Dorsolateral prefrontal cortex (tissue), 120 donors: ENCODE measurements at regions of chr7 and their contacts with region 1.

Region 1: DNA sequence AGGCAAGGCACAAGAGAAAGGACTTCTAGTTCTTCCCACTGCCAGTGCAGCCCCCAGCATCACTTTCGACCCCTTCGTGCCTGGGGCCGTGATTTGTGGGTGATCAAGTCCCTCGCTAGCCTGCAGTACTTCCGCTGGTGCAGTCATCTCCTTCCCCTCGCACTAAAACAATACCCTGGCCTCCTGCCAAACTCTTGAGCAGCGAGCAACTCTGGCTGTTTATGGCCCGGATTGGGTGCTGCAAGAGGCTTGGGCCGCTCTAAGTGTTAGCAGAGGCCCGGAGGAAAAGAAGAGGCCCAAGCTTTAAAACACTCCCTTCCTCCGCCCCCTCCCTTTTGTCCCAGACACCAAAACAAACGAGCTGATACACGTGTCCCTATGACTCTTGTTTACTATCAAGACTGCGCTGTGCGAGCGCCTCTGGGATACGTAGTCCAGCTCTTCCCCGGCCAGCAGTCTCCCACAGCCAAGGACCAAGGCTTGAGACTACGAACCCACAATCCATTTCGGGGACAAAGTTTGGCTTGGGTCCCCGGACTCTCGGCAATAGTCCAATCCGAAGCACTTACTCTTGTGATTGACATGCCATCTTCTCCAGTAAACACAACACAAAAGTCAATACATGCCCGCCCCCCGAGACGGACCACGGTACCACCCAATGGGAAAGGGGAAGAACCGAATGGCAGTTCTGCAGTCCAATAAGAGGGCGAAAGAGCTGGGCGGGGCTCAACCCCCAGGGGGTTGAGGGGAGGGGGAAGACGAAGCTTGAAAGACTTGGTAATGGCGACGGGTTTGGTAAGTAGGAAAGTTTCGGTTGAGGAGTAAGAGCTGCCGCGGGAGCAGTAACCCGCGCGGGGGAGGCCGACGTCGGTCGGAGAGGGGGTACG is at the start of gene HBP1:
- DNase-seq: peak; percentile 93 to 100 (median 99)
- H3K4me3 ChIP-seq: peak within 1 kb of the TSS; percentile 64 to 92 (median 82)
- H3K27ac ChIP-seq: peak within 1 kb of the TSS; percentile 96 to 100 (median 99)
- H3K27me3 ChIP-seq: no peaks in the 10 kb centered on the region
- CTCF ChIP-seq: peak in 1 of 56 donors; percentile 17
- total RNA-seq, gene HBP1: 33.6 to 88.2 (median 55.4) TPM

Region 2: GRCh38 chr7:106659963-106660861 is 508.3 kb before region 1 on chr7:
- intact Hi-C with region 1: loop called in 1 of 2 experiments (anchors 5 kb)
- DNase-seq: peak; percentile 5 to 71 (median 40)
- H3K4me3 ChIP-seq: peak overlapping the region; percentile 59 to 95 (median 81)
- H3K27ac ChIP-seq: peak overlapping the region; percentile 41 to 96 (median 87)
- H3K27me3 ChIP-seq: no peaks in the 10 kb centered on the region
- CTCF ChIP-seq: peak in 55 of 56 donors; percentile 13 to 80 (median 56)

Region 3: GRCh38 chr7:106793015-106793975 is 375.2 kb before region 1 on chr7:
- intact Hi-C with region 1: loop called in 1 of 2 experiments (anchors 10 kb)
- DNase-seq: no peak
- H3K4me3 ChIP-seq: no peak overlapping the region
- H3K27ac ChIP-seq: no peak overlapping the region
- H3K27me3 ChIP-seq: peaks cover 0 to 2% (median 0%) of the 10 kb centered on the region in 45 donors
- CTCF ChIP-seq: peak in 54 of 56 donors; percentile 19 to 74 (median 51)

Region 4: DNA sequence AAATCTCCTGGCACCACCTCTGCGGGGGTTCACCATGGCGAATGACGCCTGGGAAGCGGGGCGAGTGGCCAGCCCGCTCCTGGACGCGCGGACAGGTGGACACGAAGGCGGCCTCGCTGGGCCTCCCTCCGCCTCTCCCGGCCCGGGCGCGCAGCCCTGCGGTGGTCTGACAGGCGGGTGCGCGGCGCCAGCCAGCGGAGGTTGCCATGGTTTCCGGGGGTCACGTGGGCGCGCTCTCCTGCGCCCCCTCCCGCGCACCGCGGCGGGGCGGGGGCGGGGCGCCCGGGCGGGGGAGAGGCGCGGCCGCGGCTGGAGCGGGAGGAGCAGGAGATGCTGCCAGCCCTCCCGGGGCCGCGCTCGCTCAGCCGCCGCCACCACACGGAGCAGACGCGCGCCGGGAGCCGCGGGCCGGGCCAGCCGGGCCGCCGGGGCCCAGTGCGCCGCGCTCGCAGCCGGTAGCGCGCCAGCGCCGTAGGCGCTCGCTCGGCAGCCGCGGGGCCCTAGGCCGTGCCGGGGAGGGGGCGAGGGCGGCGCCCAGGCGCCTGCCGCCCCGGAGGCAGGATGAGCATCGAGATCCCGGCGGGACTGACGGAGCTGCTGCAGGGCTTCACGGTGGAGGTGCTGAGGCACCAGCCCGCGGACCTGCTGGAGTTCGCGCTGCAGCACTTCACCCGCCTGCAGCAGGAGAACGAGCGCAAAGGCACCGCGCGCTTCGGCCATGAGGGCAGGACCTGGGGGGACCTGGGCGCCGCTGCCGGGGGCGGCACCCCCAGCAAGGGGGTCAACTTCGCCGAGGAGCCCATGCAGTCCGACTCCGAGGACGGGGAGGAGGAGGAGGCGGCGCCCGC is 123.9 kb before region 1 on chr7 and contains the start of gene PRKAR2B:
- intact Hi-C with region 1: loop called (anchors 2 to 5 kb)
- DNase-seq: peak; percentile 68 to 92 (median 82)
- H3K4me3 ChIP-seq: peak within 1 kb of the TSS; percentile 71 to 97 (median 89)
- H3K27ac ChIP-seq: peak within 1 kb of the TSS; percentile 59 to 97 (median 91)
- H3K27me3 ChIP-seq: no peaks in the 10 kb centered on the region
- CTCF ChIP-seq: peak in 23 of 56 donors; percentile 7 to 49 (median 24)
- total RNA-seq, gene PRKAR2B: 24.3 to 101 (median 69.4) TPM

Region 5: GRCh38 chr7:107080099-107080505 is 88.4 kb before region 1 on chr7:
- intact Hi-C with region 1: no loop called
- DNase-seq: no peak
- H3K4me3 ChIP-seq: no peak overlapping the region
- H3K27ac ChIP-seq: no peak overlapping the region
- H3K27me3 ChIP-seq: no peaks in the 10 kb centered on the region
- CTCF ChIP-seq: no peak